PC-9 (cell line): ENCODE measurements at regions of chr1 and their contacts with region 1.

Region 1: GRCh38 chr1:112614460-112615065 is 4.4 kb downstream of the ST7L start:
- DNase-seq: peak in 1 of 2 experiments; percentile 14
- H3K4me3 ChIP-seq: no peak overlapping the region
- H3K27ac ChIP-seq: no peak overlapping the region
- H3K4me1 ChIP-seq: peaks cover 13% of the 10 kb centered on the region
- H3K27me3 ChIP-seq: no peaks in the 10 kb centered on the region
- CTCF ChIP-seq: peak; percentile 87

Region 2: GRCh38 chr1:112383759-112384356 is 230.7 kb before region 1 on chr1:
- CTCF ChIA-PET with region 1: interaction called, 16 read pairs
- POLR2A ChIA-PET with region 1: interaction called, 4 read pairs
- intact Hi-C with region 1: no loop called
- DNase-seq: no peak
- H3K4me3 ChIP-seq: no peak overlapping the region
- H3K27ac ChIP-seq: no peak overlapping the region
- H3K4me1 ChIP-seq: no peaks in the 10 kb centered on the region
- H3K27me3 ChIP-seq: peaks cover 12% of the 10 kb centered on the region; the same call in 1 of the 2 replicates
- CTCF ChIP-seq: no peak

Region 3: DNA sequence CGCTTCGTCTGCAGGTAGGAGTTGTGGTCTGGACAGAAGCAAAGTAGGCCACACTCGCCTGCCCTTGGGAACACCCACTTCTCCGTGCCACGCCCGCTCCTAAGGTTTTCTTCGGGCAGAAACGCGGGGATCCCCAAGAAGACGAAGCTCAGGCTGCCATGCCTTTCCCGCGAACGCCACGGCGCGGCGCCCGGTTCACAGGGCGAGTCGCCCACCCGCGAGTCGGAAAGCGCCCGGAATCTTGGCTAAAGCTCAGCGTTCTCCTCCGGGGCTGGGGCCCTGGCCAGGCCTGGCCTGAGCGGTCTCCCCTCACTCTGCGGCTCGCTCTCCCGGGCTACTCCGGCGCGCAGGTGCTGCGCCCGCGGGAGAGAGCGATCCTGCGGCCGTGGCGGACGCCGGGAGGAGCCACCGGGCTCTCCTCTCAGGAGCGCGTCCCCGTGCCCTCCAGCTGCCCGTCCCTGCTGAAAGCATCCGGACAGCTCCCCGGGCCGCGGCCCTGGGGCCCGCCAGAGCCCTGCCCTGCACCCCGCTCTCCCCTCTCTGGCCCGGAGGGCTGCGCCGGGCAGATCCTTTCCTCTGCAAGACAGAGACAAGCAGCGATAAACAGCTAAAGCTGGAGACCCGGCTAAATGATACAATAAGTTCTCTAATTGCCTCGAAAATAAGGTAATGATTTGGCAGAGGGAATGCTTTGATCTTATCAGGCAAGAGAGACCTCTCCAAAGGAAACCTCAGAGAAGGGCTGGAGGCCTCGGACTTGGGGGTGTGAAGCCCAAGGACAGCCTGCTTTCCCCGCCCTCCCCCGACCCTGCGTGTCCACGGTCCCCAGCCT is 112.5 kb before region 1 on chr1:
- CTCF ChIA-PET with region 1: interaction called, 5 read pairs
- POLR2A ChIA-PET with region 1: interaction called, 7 read pairs
- intact Hi-C with region 1: loop called (anchors 2 kb)
- DNase-seq: peak; percentile 55 to 70
- H3K4me3 ChIP-seq: peak overlapping the region; percentile 56
- H3K27ac ChIP-seq: no peak overlapping the region
- H3K4me1 ChIP-seq: 0 out of 2 replicates have a peak, but pooled peaks cover 4% of the 10 kb centered on the region
- H3K27me3 ChIP-seq: no peaks in the 10 kb centered on the region
- CTCF ChIP-seq: peak; percentile 72